GM12878 (cell line): ENCODE measurements at regions of chr5 and their contacts with region 1.

Region 1: DNA sequence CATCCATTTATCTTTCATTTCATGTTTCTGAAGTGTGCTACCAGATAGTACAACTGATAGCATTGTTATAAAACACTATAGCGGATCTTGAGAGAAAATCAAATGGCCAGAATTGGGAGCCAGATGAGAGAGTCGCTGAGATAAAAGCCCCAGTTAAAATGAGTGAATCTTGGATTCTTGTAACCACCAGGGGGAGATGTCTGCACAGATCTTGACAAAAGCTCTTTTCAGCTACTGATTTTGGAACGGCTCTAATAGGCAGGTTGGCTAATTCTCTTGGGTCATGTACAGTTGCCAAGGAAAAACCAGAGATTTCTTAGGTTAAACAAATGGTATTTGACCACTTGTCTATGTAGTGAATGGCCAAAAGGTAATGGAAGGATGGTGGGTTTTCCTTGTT is 21.7 kb downstream of the F2RL2 start:
- DNase-seq: no peak
- ATAC-seq: peak; percentile 89
- H3K4me3 ChIP-seq: no peak overlapping the region
- H3K27ac ChIP-seq: no peak overlapping the region
- H3K4me1 ChIP-seq: no peaks in the 10 kb centered on the region
- H3K27me3 ChIP-seq: no peaks in the 10 kb centered on the region
- CTCF ChIP-seq: peak; percentile 58 to 72 (median 71); a peak in 5 of 6 replicates
- EP300 ChIP-seq: no peak
- POLR2A ChIP-seq: no peak
- RAD21 ChIP-seq: peak; percentile 94

Region 2: GRCh38 chr5:76652809-76653414 is 51.4 kb after region 1 on chr5:
- CTCF ChIA-PET with region 1: interaction called, 7 read pairs
- POLR2A ChIA-PET with region 1: no interaction called
- RAD21 ChIA-PET with region 1: no interaction called
- SMC1A ChIA-PET with region 1: interaction called, 11 read pairs
- in situ Hi-C with region 1: no loop called
- intact Hi-C with region 1: no loop called
- DNase-seq: peak; percentile 12
- ATAC-seq: peak; percentile 50
- H3K4me3 ChIP-seq: no peak overlapping the region
- H3K27ac ChIP-seq: no peak overlapping the region
- H3K4me1 ChIP-seq: peaks cover 6% of the 10 kb centered on the region; the same call in 1 of the 2 replicates
- H3K27me3 ChIP-seq: no peaks in the 10 kb centered on the region
- CTCF ChIP-seq: no peak
- EP300 ChIP-seq: no peak
- POLR2A ChIP-seq: no peak
- RAD21 ChIP-seq: no peak

Region 3: DNA sequence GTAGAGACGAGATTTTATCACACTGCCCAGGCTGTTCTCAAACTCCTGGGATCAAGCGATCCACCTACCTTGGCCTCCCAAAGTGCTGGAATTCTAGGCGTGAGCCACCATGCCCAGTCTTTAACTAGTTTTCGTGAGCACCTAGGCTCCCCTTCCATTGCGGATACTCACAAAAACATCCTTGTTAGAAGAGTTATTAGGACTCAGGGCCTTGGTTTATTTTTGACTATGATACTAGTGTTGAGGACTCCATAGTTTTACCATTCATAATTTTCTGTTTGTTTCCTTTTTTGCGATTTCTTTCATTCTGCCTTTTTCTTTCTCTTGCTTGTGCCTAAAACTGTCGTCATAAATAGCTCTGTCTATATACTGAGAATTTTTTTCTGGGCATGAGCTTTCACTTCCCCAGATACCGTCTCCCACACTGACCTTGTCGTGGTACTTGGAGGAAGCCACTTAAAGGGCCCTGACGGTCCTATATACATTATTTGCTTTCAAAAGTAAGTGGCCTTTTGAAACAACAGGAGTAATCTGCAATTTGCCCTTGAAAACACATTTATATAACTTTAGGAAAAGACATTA is 119.6 kb after region 1 on chr5:
- CTCF ChIA-PET with region 1: interaction called, 5 read pairs
- POLR2A ChIA-PET with region 1: no interaction called
- RAD21 ChIA-PET with region 1: no interaction called
- SMC1A ChIA-PET with region 1: interaction called, 10 read pairs
- in situ Hi-C with region 1: no loop called
- intact Hi-C with region 1: loop called (anchors 2 kb)
- DNase-seq: no peak
- ATAC-seq: peak; percentile 87
- H3K4me3 ChIP-seq: 0 out of 2 replicates have a peak overlapping the region, but pooled peaks have one; percentile 1
- H3K27ac ChIP-seq: no peak overlapping the region
- H3K4me1 ChIP-seq: peaks cover 18% of the 10 kb centered on the region
- H3K27me3 ChIP-seq: peaks cover 0 to 8% of the 10 kb centered on the region in 2 experiments; a peak in 2 of 4 replicates
- CTCF ChIP-seq: no peak
- EP300 ChIP-seq: peak; percentile 79 to 82; a peak in 2 of 4 replicates
- POLR2A ChIP-seq: no peak
- RAD21 ChIP-seq: no peak